ENCODE measurements at regions of chr14 and their contacts with region 1.

Region 1: DNA sequence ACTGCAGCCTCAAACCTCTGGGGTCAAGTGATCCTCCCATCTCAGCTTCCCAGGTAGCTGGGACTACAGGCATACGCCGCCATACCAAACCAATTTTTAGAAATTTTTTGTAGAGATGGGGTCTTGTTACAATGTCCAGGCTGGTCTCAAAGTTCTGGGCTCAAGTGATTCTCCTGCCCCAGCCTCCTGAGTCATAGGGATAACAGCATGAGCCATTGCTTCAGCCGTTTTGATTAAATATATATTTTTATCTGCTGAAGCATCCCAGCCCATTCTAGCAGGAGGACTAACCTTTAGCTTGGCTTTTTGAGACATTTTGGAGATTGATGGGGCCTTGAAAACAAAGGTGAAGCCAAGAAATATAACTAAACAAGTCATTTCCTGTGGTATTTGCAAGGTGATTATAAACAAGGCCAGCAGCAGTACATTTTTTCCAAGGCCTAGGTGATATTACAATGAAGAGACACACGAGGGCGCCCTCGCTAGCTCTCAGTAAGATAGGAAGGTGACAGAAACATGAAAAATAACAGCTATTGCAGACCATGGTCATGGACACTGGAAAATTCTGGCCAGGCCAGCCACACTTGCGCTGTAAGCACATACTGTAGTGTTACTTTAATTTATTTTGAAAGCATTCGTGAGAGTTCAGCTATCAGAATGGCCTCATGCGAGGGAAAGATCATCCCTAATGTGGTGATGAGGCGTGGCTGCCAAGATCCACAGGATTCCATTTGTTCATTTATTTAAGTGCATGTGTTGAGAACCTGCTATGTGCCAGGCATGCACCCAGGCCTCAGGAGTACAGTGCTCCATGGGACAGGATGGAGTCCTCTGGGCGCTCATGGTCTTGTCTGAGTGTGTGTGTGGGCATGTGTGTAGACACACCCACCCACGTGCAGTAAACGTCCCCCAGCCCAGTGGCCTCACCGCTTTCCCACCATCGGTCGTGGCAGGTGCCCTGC is 63.5 kb downstream of the DGLUCY start:
- DNase-seq: no peak
- H3K4me3 ChIP-seq: no peak overlapping the region
- H3K27ac ChIP-seq: peak overlapping the region in 2 of 4 donors; percentile 23 to 31
- H3K4me1 ChIP-seq: peaks cover 0 to 21% (median 0%) of the 10 kb centered on the region in 3 donors
- H3K27me3 ChIP-seq: no peaks in the 10 kb centered on the region
- CTCF ChIP-seq: peak; percentile 63 to 93 (median 79)
- POLR2A ChIP-seq: no peak

Region 2: DNA sequence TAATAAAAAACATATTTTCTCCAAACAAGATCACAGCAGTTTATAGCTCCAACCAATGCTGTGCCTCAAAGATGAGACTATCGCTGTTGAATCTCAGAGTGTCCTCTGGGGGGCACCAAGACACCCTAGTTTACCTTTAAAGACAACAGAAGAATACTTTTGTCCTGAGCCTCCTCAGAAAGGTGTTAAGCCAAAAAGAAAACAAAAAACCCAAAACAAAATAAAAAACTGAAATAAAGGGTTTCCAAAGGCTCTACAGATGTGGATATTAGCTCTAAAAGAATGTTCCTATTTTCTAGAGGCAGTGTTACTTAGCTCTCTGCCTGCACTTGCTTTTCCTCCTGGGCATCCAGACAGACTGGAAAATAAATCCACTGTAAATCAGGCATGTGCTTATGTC is 274.3 kb before region 1 on chr14:
- intact Hi-C with region 1: loop called (anchors 2 kb)
- DNase-seq: no peak
- H3K4me3 ChIP-seq: no peak overlapping the region
- H3K27ac ChIP-seq: no peak overlapping the region
- H3K4me1 ChIP-seq: no peaks in the 10 kb centered on the region
- H3K27me3 ChIP-seq: no peaks in the 10 kb centered on the region
- CTCF ChIP-seq: peak; percentile 47 to 82 (median 70)
- POLR2A ChIP-seq: no peak

Region 3: GRCh38 chr14:91059576-91060350 is 117.6 kb before region 1 on chr14:
- intact Hi-C with region 1: loop called (anchors 10 kb)
- DNase-seq: no peak
- H3K4me3 ChIP-seq: peak overlapping the region; percentile 91 to 96 (median 94)
- H3K27ac ChIP-seq: peak overlapping the region; percentile 96 to 99 (median 98)
- H3K4me1 ChIP-seq: peaks cover 0 to 51% (median 29%) of the 10 kb centered on the region in 3 donors
- H3K27me3 ChIP-seq: no peaks in the 10 kb centered on the region
- CTCF ChIP-seq: no peak
- POLR2A ChIP-seq: no peak

Region 4: GRCh38 chr14:91284146-91284790 is 106.9 kb after region 1 on chr14:
- intact Hi-C with region 1: loop called (anchors 5 kb)
- DNase-seq: no peak
- H3K4me3 ChIP-seq: no peak overlapping the region
- H3K27ac ChIP-seq: no peak overlapping the region
- H3K4me1 ChIP-seq: peaks cover 0 to 6% (median 5%) of the 10 kb centered on the region in 3 donors
- H3K27me3 ChIP-seq: no peaks in the 10 kb centered on the region
- CTCF ChIP-seq: no peak
- POLR2A ChIP-seq: no peak